ENCODE measurements at regions of chr15 and their contacts with region 1.

Region 1: GRCh38 chr15:62841891-62842559 is 200.5 kb upstream of the TPM1 start:
- DNase-seq: no peak

Region 2: DNA sequence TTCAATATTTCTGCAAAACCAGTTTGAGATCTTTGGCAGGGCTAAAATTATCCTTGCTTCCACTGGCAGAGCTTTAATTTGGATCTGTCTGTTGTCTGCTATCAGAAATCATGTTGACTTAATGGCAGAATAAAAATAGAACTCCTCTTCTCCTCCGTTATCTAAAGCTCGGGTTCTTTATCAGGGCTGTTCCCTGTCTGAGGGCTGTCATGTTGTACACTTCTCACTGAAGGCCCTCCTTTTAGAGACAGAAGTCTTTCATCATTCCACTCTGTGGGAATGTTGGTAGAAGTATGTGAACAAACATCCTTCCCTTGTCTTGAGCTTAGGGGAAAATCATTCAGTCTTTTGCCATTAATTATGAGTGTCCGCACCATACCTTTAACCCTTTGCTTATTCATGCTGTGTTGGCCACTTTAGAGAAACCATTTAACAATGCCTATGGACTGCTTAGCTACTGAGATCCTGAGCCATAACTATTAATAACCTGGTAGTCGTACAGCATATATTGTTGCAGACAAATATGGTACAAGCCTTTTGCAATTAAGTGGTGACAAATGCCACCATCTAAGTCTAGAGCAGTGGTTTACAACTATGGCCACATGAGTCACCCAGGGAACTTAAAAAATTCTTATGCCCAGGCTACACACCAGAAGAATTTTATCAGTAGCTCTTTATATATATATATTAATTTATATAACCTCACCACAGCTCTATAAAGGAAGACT is 25.5 kb before region 1 on chr15:
- intact Hi-C with region 1: loop called (anchors 1 kb)
- DNase-seq: no peak

Region 3: DNA sequence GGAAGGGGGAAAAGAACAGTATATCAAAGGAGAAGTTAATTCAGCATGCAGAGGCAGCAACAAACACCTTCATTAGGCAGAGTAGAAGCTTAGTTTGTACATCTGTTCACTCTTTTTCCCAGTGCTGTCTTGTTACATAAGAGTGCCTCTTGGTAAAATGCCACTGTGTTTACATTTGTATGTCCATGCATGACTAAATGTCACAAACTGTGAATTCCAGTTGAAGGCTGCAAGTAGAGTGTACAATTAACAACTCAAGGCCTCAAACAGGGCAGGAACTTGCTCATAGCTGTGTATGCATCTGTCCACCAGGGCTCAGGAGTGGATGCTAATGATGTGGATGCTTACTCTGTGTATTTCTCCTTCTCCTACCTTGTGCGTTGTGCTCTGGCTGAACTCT is 13.7 kb before region 1 on chr15:
- intact Hi-C with region 1: no loop called
- DNase-seq: no peak